CD4-positive, alpha-beta memory T cell (primary cell): ENCODE measurements at regions of chr7 and their contacts with region 1.

Region 1: GRCh38 chr7:77351539-77352004 is 64.6 kb downstream of the GSAP start:
- DNase-seq: peak; percentile 72 to 79 (median 76)
- H3K4me3 ChIP-seq: peak overlapping the region in 1 of 2 donors; percentile 36
- H3K4me3 Mint-ChIP-seq: peak overlapping the region; percentile 78 to 89 (median 84)
- H3K27ac ChIP-seq: peak overlapping the region; percentile 4
- H3K27ac Mint-ChIP-seq: peak overlapping the region; percentile 83 to 97 (median 90)
- H3K4me1 ChIP-seq: peaks cover 68% of the 10 kb centered on the region
- H3K4me1 Mint-ChIP-seq: peaks cover 52 to 70% (median 59%) of the 10 kb centered on the region in 4 donors
- H3K27me3 ChIP-seq: no peaks in the 10 kb centered on the region
- H3K27me3 Mint-ChIP-seq: no peaks in the 10 kb centered on the region

Region 2: GRCh38 chr7:77199013-77199966 is 152.3 kb before region 1 on chr7 and contains the start of gene FGL2:
- CTCF ChIA-PET with region 1: no interaction called
- POLR2A ChIA-PET with region 1: no interaction called
- intact Hi-C with region 1: loop called (anchors 5 kb)
- DNase-seq: peak; percentile 37 to 49 (median 43)
- H3K4me3 ChIP-seq: peak within 1 kb of the TSS; percentile 51 to 67
- H3K4me3 Mint-ChIP-seq: peak within 1 kb of the TSS; percentile 82 to 93 (median 88)
- H3K27ac ChIP-seq: peak within 1 kb of the TSS; percentile 56
- H3K27ac Mint-ChIP-seq: peak within 1 kb of the TSS; percentile 60 to 96 (median 91)
- H3K4me1 ChIP-seq: peaks cover 52% of the 10 kb centered on the region
- H3K4me1 Mint-ChIP-seq: peaks cover 27 to 42% (median 34%) of the 10 kb centered on the region in 4 donors
- H3K27me3 ChIP-seq: no peaks in the 10 kb centered on the region
- H3K27me3 Mint-ChIP-seq: no peaks in the 10 kb centered on the region
- total RNA-seq, gene FGL2: 2.9 to 4.5 TPM

Region 3: GRCh38 chr7:77247206-77247850 is 104.2 kb before region 1 on chr7:
- CTCF ChIA-PET with region 1: interaction called, 5 read pairs
- POLR2A ChIA-PET with region 1: no interaction called
- intact Hi-C with region 1: loop called (anchors 5 kb)
- DNase-seq: peak; percentile 78 to 85 (median 80)
- H3K4me3 ChIP-seq: no peak overlapping the region
- H3K4me3 Mint-ChIP-seq: no peak overlapping the region
- H3K27ac ChIP-seq: no peak overlapping the region
- H3K27ac Mint-ChIP-seq: no peak overlapping the region
- H3K4me1 ChIP-seq: no peaks in the 10 kb centered on the region
- H3K4me1 Mint-ChIP-seq: peaks cover 0 to 4% (median under 1%) of the 10 kb centered on the region in 4 donors
- H3K27me3 ChIP-seq: no peaks in the 10 kb centered on the region
- H3K27me3 Mint-ChIP-seq: no peaks in the 10 kb centered on the region

Region 4: DNA sequence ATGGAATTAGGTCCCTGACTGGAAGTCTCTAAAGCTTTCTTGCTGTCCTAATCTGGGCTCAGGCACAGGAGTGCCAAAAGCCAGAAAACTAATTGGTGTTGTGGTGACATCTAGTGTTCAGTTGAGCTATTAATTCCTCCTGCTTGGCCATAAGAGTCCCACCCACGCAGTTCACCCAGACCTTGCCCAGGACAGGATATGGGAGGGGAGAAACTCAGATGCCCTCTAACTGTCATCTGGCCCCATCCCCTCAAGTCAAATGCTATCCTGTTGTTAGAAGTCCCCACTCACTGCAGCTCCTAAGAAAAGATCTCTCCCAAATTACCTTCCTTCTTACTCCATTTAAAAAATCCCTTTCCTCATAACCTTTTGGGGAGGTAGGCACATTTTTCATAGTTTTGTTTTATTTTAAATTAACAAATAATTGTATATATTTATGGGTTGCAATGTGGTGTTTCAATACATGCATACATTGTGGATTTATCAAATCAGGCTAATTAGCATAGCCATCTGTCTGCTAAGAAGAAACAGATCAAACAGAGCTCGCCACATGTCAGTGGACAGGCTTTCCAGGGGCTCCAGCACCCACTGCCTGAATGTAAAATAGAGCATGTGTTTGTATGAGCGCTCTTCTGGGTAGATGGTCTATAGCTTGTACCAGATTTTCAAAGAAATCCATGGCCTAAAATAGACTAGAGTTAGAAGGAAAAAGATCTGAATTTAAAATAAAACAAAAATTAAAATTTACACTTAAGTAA is 19.5 kb before region 1 on chr7:
- CTCF ChIA-PET with region 1: interaction called, 8 read pairs
- POLR2A ChIA-PET with region 1: interaction called, 4 read pairs
- intact Hi-C with region 1: loop called (anchors 2 kb)
- DNase-seq: peak in 4 of 5 donors; percentile 51 to 57 (median 54)
- H3K4me3 ChIP-seq: no peak overlapping the region
- H3K4me3 Mint-ChIP-seq: no peak overlapping the region
- H3K27ac ChIP-seq: no peak overlapping the region
- H3K27ac Mint-ChIP-seq: no peak overlapping the region
- H3K4me1 ChIP-seq: peaks cover 38% of the 10 kb centered on the region
- H3K4me1 Mint-ChIP-seq: peaks cover 31 to 56% (median 39%) of the 10 kb centered on the region in 4 donors
- H3K27me3 ChIP-seq: no peaks in the 10 kb centered on the region
- H3K27me3 Mint-ChIP-seq: no peaks in the 10 kb centered on the region

Region 5: GRCh38 chr7:77338883-77339629 is 12.5 kb before region 1 on chr7:
- CTCF ChIA-PET with region 1: interaction called, 4 read pairs
- POLR2A ChIA-PET with region 1: interaction called, 4 read pairs
- intact Hi-C with region 1: loop called (anchors 1 kb)
- DNase-seq: no peak
- H3K4me3 ChIP-seq: no peak overlapping the region
- H3K4me3 Mint-ChIP-seq: no peak overlapping the region
- H3K27ac ChIP-seq: no peak overlapping the region
- H3K27ac Mint-ChIP-seq: peak overlapping the region in 3 of 7 donors; percentile 0 to 43 (median 31)
- H3K4me1 ChIP-seq: peaks cover 14% of the 10 kb centered on the region
- H3K4me1 Mint-ChIP-seq: peaks cover 7 to 20% (median 18%) of the 10 kb centered on the region in 4 donors
- H3K27me3 ChIP-seq: no peaks in the 10 kb centered on the region
- H3K27me3 Mint-ChIP-seq: peaks cover 0 to 2% of the 10 kb centered on the region in 2 donors

Region 6: GRCh38 chr7:77415823-77416622 is 64.5 kb after region 1 on chr7 and contains the start of gene GSAP:
- CTCF ChIA-PET with region 1: interaction called, 9 read pairs
- POLR2A ChIA-PET with region 1: interaction called, 37 read pairs
- intact Hi-C with region 1: loop called (anchors 2 kb)
- DNase-seq: peak; percentile 38 to 60 (median 52)
- H3K4me3 ChIP-seq: peak within 1 kb of the TSS; percentile 8 to 56
- H3K4me3 Mint-ChIP-seq: peak within 1 kb of the TSS; percentile 78 to 91 (median 84)
- H3K27ac ChIP-seq: peak within 1 kb of the TSS; percentile 58
- H3K27ac Mint-ChIP-seq: peak within 1 kb of the TSS; percentile 72 to 84 (median 77)
- H3K4me1 ChIP-seq: peaks cover 24% of the 10 kb centered on the region
- H3K4me1 Mint-ChIP-seq: peaks cover 17 to 49% (median 30%) of the 10 kb centered on the region in 4 donors
- H3K27me3 ChIP-seq: no peaks in the 10 kb centered on the region
- H3K27me3 Mint-ChIP-seq: peaks cover 0 to under 1% of the 10 kb centered on the region in 2 donors
- total RNA-seq, gene GSAP: 20.5 to 22.0 TPM

Region 7: GRCh38 chr7:77536413-77537135 is 185.0 kb after region 1 on chr7:
- CTCF ChIA-PET with region 1: no interaction called
- POLR2A ChIA-PET with region 1: interaction called, 5 read pairs
- intact Hi-C with region 1: loop called (anchors 1 kb)
- DNase-seq: peak; percentile 93 to 96 (median 94)
- H3K4me3 ChIP-seq: peak overlapping the region; percentile 76 to 95
- H3K4me3 Mint-ChIP-seq: peak overlapping the region; percentile 93 to 98 (median 98)
- H3K27ac ChIP-seq: peak overlapping the region; percentile 77
- H3K27ac Mint-ChIP-seq: peak overlapping the region; percentile 94 to 98 (median 96)
- H3K4me1 ChIP-seq: peaks cover 7% of the 10 kb centered on the region
- H3K4me1 Mint-ChIP-seq: peaks cover 6 to 28% (median 16%) of the 10 kb centered on the region in 4 donors
- H3K27me3 ChIP-seq: no peaks in the 10 kb centered on the region
- H3K27me3 Mint-ChIP-seq: no peaks in the 10 kb centered on the region

Region 8: DNA sequence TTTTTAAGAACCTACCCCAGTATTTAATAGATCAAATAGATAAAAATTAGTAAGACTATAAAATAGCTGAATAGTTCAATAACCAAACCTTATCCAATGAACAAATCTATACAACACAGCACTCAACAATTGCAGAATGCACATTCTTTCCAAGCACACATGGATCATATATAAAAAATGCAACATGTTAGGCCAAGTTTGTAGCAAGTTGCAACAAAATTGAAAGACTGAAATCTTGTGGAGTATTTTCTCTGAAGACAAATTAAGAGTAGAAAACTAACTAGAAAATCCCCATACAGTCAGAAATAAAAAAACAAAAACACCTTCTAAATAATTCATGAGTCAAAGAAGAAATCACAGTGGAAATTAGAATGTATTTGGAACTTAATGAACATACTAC is 764.3 kb after region 1 on chr7:
- CTCF ChIA-PET with region 1: no interaction called
- POLR2A ChIA-PET with region 1: no interaction called
- intact Hi-C with region 1: no loop called
- DNase-seq: no peak
- H3K4me3 ChIP-seq: no peak overlapping the region
- H3K4me3 Mint-ChIP-seq: no peak overlapping the region
- H3K27ac ChIP-seq: no peak overlapping the region
- H3K27ac Mint-ChIP-seq: no peak overlapping the region
- H3K4me1 ChIP-seq: no peaks in the 10 kb centered on the region
- H3K4me1 Mint-ChIP-seq: no peaks in the 10 kb centered on the region
- H3K27me3 ChIP-seq: peaks cover 3% of the 10 kb centered on the region
- H3K27me3 Mint-ChIP-seq: peaks cover 21 to 27% of the 10 kb centered on the region in 2 donors